Activated B cell treated with CpG ODN at 0.5 μM for 24 hours (primary cell): ENCODE measurements at regions of chr2 and their contacts with region 1.

Region 1: DNA sequence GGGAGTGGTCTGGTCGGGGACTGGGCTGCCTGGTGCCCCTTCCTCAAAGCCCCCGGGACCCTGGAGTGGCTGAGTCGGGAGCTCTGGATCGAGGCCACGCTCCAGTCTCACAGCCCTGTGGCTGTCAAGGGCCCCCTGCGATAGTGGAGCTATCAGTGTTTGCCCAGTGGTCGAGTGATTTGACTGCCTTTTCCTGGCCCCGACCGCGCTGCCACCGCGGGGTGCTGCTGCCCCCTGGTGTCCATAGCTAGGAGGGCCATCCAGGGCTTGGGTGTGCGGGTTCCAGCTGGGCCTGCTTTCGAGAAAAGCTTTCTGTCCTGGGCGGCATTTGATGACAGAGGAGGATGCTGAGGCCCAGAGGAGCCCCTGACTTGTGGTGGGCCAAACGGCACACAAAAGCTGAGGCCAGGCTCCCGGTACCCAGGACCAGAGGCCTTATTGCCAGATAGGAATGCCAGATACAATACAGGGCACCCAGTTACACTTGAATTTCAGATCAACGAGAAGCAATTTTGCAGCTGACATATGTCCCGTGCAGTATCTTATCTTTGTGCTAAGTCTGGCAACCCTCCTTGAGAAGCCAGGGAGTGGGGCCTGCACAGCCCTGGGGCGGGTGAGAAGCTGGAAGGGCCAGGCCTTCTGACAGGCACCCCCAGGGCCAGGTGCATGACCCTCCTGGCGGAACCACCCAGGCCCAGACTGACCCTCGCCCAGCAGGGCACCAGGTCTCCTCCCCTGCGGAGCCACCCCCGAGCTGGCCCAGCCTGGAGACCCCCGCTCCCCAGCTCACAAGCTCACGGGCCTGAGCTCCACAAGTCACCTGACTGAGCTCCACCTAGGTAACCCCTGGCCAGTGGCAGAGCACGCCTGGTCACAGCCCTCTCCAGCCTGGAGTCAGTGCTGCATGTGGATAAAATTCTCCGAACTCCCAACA is 13.0 kb downstream of the ODC1 start:
- DNase-seq: peak; percentile 78
- ATAC-seq: peak; percentile 87
- H3K4me3 Mint-ChIP-seq: no peak overlapping the region
- H3K27ac Mint-ChIP-seq: no peak overlapping the region
- H3K4me1 Mint-ChIP-seq: peaks cover 15% of the 10 kb centered on the region
- H3K27me3 Mint-ChIP-seq: peaks cover 4% of the 10 kb centered on the region
- CTCF ChIP-seq: peak; percentile 45

Region 2: GRCh38 chr2:9813312-9814133 is 621.6 kb before region 1 on chr2:
- CTCF ChIA-PET with region 1: no interaction called
- POLR2A ChIA-PET with region 1: no interaction called
- intact Hi-C with region 1: loop called (anchors 10 kb)
- DNase-seq: peak; percentile 59
- ATAC-seq: peak; percentile 89
- H3K4me3 Mint-ChIP-seq: no peak overlapping the region
- H3K27ac Mint-ChIP-seq: no peak overlapping the region
- H3K4me1 Mint-ChIP-seq: peaks cover 9% of the 10 kb centered on the region
- H3K27me3 Mint-ChIP-seq: peaks cover 4% of the 10 kb centered on the region
- CTCF ChIP-seq: peak; percentile 95

Region 3: DNA sequence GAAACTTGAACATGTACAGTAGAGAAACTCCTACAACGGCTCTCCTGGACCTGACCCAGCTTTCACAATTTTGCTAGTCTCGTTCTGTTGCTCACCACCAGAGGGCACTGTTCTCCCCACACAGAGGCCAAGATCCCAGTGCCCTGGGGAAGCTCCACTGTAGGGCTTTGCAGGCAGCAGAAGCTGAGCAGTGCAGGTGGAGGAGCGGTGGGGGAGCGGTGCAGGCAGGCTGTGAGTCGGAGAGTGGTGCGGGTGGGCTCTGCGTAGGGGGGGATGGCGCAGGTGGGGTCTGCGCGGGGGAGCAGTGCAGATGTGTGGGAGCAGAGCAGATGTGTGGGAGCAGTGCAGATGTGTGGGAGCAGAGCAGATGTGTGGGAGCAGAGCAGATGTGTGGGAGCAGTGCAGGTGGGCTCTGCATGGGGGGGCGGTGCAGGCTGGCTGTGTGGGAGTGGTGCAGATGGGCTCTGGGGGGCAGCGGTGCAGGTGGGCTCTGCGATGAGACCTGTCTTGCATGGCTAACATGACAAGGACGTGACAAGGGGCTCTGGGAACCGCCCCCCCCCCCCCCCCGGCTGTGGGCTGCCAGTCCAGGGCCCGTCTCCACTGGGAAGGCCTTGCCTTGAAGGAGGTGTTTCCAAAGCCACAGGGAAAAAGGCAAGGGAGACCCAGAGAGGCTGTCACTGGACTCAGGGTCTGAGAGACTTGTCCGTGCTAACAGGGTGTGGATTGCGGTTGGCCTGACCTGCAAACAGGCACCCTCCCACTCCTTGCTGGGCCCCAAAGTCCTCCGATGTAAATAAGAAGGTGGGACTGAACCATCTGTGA is 362.3 kb before region 1 on chr2:
- CTCF ChIA-PET with region 1: interaction called, 104 read pairs
- POLR2A ChIA-PET with region 1: interaction called, 9 read pairs
- intact Hi-C with region 1: loop called (anchors 1 kb)
- DNase-seq: peak; percentile 42
- ATAC-seq: peak; percentile 95
- H3K4me3 Mint-ChIP-seq: no peak overlapping the region
- H3K27ac Mint-ChIP-seq: no peak overlapping the region
- H3K4me1 Mint-ChIP-seq: peaks cover 4% of the 10 kb centered on the region
- H3K27me3 Mint-ChIP-seq: peaks cover 43% of the 10 kb centered on the region
- CTCF ChIP-seq: no peak

Region 4: DNA sequence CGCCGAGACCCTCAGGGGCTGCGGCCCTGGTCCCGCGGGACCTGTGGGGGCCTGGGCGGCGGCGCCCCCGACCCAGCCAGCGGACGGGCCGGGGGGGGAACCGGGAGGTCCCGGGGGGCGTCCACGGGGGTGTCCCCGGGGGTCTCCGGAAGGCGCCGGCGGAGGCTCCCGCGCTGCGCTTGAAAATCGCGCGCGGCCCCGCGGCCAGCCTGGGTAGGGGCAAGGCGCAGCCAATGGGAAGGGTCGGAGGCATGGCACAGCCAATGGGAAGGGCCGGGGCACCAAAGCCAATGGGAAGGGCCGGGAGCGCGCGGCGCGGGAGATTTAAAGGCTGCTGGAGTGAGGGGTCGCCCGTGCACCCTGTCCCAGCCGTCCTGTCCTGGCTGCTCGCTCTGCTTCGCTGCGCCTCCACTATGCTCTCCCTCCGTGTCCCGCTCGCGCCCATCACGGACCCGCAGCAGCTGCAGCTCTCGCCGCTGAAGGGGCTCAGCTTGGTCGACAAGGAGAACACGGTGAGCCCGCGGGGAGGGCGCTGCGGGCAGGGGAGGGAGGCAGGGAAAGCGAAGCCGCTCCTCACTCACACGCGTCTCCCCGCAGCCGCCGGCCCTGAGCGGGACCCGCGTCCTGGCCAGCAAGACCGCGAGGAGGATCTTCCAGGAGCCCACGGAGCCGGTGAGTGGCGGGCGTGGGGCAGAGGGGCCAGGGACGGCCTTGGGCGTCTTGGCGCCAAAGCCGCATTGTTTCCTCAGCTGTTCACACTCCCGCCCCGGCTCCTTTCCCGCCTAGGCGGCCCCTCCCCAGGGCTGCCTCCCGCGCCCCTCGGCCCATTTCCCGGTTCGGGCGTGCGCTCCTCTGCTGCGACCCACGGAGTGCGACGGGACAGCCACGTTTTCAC is 312.5 kb before region 1 on chr2 and contains the start of gene RRM2:
- CTCF ChIA-PET with region 1: interaction called, 162 read pairs
- POLR2A ChIA-PET with region 1: interaction called, 12 read pairs
- intact Hi-C with region 1: loop called (anchors 1 kb)
- DNase-seq: peak; percentile 77
- ATAC-seq: peak; percentile 82
- H3K4me3 Mint-ChIP-seq: peak within 1 kb of the TSS; percentile 97
- H3K27ac Mint-ChIP-seq: peak within 1 kb of the TSS; percentile 12
- H3K4me1 Mint-ChIP-seq: peaks cover 35% of the 10 kb centered on the region
- H3K27me3 Mint-ChIP-seq: peaks cover 8% of the 10 kb centered on the region
- CTCF ChIP-seq: no peak
- total RNA-seq, gene RRM2: 8.6 and 9.3 TPM in 2 replicates

Region 5: GRCh38 chr2:10162586-10163497 is 272.3 kb before region 1 on chr2:
- CTCF ChIA-PET with region 1: interaction called, 10 read pairs
- POLR2A ChIA-PET with region 1: no interaction called
- intact Hi-C with region 1: no loop called
- DNase-seq: no peak
- ATAC-seq: no peak
- H3K4me3 Mint-ChIP-seq: no peak overlapping the region
- H3K27ac Mint-ChIP-seq: no peak overlapping the region
- H3K4me1 Mint-ChIP-seq: peaks cover 19% of the 10 kb centered on the region
- H3K27me3 Mint-ChIP-seq: no peaks in the 10 kb centered on the region
- CTCF ChIP-seq: no peak

Region 6: DNA sequence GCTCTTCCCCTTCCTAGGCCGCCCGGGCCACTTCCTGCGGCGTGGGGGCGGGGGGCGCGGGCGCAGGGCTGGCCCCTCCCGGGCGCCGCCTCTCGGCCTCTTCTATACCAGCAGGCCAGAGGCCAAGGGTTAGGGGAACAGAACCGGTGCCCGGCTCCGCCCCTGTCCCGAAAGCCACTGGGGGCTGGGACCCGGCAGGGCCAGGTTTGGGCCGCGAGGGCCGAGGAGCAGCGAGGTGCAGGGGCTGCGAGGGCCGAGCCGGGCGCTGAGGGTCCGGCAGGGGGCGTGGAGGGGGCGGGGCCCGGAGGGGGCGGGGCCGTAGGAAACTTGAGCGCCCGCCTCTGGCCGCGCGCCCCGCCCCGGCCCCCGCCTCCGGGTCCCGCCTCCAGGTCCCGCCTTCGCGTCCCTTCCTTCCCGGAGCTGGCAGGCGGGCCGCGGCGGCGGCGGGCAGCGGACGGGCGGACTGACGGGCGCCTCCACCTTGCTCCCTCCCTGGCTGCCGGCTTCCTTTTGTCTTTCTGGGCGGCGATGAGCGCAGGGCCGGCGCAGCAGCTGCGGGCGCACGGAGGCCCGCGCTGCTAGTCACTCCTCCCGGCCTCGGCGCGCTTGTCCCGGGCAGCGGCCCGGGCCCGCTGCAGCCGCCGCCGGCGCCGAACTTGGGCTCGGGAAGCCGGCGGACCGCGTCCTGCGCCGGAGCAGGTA is 132.5 kb before region 1 on chr2 and contains the start of gene HPCAL1:
- CTCF ChIA-PET with region 1: interaction called, 10 read pairs
- POLR2A ChIA-PET with region 1: interaction called, 3 read pairs
- intact Hi-C with region 1: no loop called
- DNase-seq: peak; percentile 87
- ATAC-seq: peak; percentile 84
- H3K4me3 Mint-ChIP-seq: peak within 1 kb of the TSS; percentile 96
- H3K27ac Mint-ChIP-seq: peak within 1 kb of the TSS; percentile 80
- H3K4me1 Mint-ChIP-seq: peaks cover 58% of the 10 kb centered on the region
- H3K27me3 Mint-ChIP-seq: no peaks in the 10 kb centered on the region
- CTCF ChIP-seq: no peak
- total RNA-seq, gene HPCAL1: 15.2 and 15.9 TPM in 2 replicates